Aorta (tissue), 5 donors: ENCODE measurements at regions of chr15 and their contacts with region 1.

Region 1: DNA sequence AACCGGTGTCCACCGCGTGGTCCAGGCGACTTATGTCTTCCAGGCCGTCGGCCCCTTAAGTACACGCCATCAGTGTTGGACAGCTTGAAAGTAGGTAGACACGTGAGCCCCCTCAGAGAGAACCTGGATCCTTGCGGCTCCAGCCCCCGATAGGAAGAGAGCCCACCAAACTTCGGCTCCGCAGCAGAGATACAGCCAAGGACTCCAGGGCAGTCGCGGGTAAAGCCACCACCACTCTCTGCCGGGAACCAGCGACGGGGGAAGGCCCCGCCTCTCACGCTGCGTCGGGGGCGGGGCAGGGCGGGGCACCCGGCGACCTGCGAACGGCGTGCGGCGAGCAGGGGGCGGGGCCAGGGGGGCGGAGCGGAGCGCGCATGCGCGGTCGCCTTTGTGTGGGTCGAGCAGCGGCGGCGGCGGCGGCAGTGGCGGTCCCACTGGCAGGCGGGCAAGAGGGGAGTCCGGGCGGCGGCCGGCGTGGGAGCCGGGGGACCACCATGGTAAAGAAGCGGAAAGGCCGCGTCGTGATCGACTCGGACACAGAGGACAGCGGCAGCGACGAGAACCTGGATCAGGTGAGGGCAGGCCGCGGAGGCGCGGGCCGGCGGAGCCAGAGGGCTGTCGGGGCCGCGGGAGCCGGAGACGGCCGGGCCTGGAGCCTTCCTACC is at the start of gene RTF1:
- DNase-seq: peak; percentile 96 to 99
- ATAC-seq: peak; percentile 98
- H3K4me3 ChIP-seq: peak within 1 kb of the TSS; percentile 52 to 86
- H3K27ac ChIP-seq: peak within 1 kb of the TSS in 1 of 2 donors; percentile 66
- H3K4me1 ChIP-seq: no peaks in the 10 kb centered on the region
- H3K27me3 ChIP-seq: no peaks in the 10 kb centered on the region
- total RNA-seq, gene RTF1: 29.1 to 36.8 TPM

Region 2: GRCh38 chr15:41493205-41493901 is 76.5 kb after region 1 on chr15 and contains the start of gene ITPKA:
- intact Hi-C with region 1: loop called in 1 of 2 experiments (anchors 5 kb)
- DNase-seq: peak; percentile 81 to 91
- ATAC-seq: peak; percentile 78
- H3K4me3 ChIP-seq: peak within 1 kb of the TSS; percentile 62 to 84
- H3K27ac ChIP-seq: no peak within 1 kb of the TSS
- H3K4me1 ChIP-seq: no peaks in the 10 kb centered on the region
- H3K27me3 ChIP-seq: no peaks in the 10 kb centered on the region
- total RNA-seq, gene ITPKA: 0.29 to 0.33 TPM